Left colon (tissue), 2 donors: ENCODE measurements at regions of chr6 and their contacts with region 1.

Region 1: DNA sequence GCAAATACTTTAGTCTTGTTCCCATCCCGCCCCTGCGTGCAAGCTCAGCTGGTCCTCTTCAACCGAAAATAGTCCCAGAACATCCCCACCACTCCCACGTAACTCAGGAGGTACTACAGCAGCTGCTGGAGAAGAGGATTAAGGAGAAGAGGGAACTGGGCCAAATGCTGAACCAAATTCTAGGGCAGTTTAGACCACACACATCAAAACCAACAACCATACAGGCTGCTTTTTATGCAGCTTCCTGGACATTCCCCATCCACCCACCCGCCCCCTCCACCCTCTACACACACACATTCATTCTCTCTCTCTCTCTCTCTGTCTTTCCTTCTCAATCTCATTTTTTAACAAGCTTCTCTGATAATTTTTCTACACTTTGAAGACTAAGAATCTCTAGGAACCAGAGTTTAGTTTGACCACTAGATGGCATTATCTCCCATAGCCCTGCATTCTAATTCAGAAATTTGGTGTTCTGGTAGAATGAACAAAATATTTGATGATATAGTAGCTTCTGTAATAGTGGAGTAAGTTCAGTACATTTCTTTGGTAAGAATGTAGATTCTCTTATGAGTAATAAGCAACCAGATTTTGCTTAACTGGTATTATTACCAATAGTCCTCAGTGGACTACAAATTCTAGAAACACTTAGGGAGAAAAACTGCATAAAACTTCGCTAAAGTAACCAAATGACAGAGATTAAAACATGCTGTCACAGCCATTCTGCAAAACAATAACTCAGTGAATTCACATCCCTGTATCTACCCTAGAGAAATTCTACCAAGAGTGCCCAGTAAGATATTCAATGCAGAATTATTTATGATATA is 52.1 kb upstream of the BEND6 start:
- DNase-seq: no peak
- ATAC-seq: no peak

Region 2: DNA sequence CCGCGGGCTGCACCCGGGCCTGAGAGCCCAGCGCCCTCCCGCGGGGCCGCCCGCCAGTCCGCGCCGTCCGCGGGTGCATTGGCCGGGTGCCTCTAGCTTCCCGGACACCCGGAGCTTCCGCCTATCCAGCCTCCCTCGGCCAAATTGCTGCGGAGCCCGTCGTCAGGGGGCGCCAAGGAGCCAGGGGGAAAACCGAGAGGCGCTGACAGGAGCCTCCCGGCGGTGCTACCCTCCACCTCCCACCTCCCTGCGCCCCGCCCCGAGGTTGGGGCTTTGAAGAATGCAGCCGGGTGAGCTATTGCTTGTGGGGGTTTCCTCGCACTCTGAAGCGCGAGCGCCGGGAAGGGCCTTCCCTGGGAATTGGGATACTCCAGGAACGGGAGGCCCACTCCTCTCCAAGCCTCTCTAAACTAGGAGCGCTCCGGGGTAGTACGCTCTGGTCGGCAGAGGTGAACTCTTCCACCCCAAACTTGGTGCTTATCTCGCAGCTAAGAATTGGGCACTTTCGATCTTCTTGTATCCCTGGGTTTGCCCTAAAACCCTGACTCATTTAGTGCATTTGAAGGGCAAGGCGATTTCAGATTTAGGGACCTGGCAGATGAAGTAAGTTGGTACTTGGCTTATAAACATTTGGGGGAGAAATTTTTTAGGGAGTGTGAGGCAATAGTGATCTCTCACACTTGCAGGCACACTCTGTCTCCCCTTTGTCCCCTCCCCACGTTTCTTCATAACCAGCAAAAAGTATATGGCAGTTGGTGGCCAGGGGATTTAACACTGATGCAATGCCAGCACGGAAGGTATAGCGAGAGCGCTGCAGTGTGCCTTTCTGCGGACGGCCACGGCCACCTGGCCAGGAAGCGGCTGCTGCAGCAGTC is 52.6 kb after region 1 on chr6:
- intact Hi-C with region 1: loop called in 1 of 2 experiments (anchors 10 kb)
- DNase-seq: peak; percentile 75 to 82
- ATAC-seq: peak; percentile 93

Region 3: DNA sequence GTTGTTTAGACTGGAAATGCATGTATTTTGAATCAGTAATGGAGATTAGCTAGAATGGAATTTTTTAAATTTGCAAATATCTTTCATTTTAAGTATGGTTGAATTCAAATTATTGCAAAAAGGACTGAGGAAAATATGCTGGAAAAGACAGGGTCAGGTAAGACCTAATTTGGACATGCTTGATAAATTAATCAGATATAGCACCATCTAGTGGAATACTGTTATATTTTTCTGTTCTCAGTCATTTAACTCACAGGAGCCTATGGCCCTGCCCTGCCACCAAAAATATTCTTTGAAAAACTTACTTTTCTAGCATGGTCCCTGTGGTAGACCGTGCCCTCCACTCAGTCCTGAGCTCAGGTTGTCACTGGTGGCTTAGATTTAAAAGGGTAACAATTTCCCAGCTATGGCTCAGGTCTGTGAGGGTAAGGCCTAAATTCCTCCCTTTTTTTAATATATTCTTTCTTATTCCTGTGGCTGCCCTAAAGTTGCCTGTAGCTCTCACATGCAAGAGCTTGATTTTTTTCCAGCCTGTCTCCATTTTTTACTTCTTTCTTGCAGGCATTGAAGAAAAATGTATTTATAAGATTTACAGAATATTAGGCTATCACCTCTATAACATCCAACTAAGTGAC is 118.3 kb after region 1 on chr6:
- intact Hi-C with region 1: loop called in 1 of 2 experiments (anchors 2 kb)
- DNase-seq: no peak
- ATAC-seq: peak; percentile 46

Region 4: GRCh38 chr6:57324538-57324937 is 421.7 kb after region 1 on chr6:
- intact Hi-C with region 1: loop called (anchors 2 to 10 kb)
- DNase-seq: no peak
- ATAC-seq: no peak